AG04449 (cell line): ENCODE measurements at regions of chr7 and their contacts with region 1.

Region 1: DNA sequence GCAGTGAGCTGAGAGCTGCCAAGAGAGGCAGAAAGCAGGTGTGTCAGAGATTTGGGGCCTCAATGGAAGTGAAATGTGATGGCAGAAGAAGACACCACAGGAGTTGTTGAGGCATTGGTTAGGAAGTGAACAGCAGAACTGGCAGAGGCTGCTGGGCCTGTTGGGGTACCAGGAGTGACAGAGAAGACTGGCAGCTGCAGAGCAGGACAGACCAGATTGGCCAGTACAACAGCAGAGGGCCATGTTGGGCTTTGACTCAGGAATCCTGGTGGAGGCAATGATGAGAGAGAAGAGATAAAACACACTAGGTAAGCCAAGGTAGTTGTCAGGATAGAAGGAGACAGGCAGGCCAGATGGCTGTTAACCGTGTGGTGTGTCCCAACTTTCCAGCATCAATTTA is 19.9 kb upstream of the HERPUD2 start:
- DNase-seq: no peak
- H3K4me3 ChIP-seq: no peak overlapping the region
- CTCF ChIP-seq: no peak

Region 2: DNA sequence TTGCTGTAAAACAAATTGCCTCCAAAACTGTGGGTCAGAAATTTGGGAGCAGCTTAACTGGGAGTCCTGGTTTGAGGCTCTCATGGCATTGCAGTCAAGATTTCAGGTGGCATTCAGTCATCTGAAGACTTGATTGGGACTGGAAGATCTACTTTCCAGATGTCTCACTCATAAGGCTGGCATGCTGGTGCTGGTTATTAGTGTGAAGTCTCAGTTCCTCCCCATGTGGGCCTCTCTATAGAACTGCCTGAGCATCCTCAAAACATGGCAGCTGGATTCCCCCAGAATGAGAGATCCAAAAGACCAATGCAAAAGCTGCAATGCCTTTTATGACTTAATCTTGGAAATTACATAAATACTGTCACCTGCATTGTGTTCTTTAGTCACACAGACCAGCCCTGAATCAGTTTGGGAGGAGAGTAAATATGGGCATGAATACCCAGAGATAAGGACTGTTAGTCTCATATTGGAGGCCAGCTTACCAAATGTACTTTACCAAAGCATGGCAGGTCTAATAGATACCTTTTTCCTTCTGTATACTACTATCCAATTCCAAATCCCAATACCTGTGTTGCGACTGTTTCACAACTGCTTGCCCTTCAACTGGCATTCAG is 13.5 kb before region 1 on chr7:
- CTCF ChIA-PET with region 1: interaction called, 14 read pairs
- POLR2A ChIA-PET with region 1: no interaction called
- DNase-seq: no peak
- H3K4me3 ChIP-seq: no peak overlapping the region
- CTCF ChIP-seq: no peak

Region 3: DNA sequence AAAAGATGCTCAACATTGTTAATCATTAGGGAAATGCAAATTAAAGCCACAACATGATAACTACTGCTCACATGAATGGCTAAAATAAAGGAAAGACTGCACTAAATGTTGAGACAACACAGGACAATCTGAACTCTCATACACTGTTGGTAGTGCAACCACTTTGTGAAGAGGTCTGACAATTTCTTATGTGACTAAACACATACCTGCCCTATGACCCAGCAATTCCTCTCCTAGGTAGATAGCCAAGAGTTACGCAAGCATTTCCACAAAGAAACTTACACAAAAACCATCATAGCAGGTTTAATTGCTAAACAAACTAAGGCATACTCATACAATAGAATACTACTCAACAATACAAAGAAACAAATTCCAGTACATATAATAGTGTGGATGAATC is 21.9 kb after region 1 on chr7:
- CTCF ChIA-PET with region 1: no interaction called
- POLR2A ChIA-PET with region 1: no interaction called
- DNase-seq: no peak
- H3K4me3 ChIP-seq: no peak overlapping the region
- CTCF ChIP-seq: no peak

Region 4: GRCh38 chr7:35906191-35906908 is 191.5 kb after region 1 on chr7:
- CTCF ChIA-PET with region 1: interaction called, 140 read pairs
- POLR2A ChIA-PET with region 1: no interaction called
- DNase-seq: peak; percentile 36
- H3K4me3 ChIP-seq: no peak overlapping the region
- CTCF ChIP-seq: peak; percentile 79